Breast epithelium (tissue), 4 donors: ENCODE measurements at regions of chr18 and their contacts with region 1.

Region 1: GRCh38 chr18:37874721-37875120 is 309.1 kb upstream of the CELF4 start:
- DNase-seq: no peak
- H3K4me3 ChIP-seq: no peak overlapping the region
- H3K27ac ChIP-seq: no peak overlapping the region
- H3K4me1 ChIP-seq: no peaks in the 10 kb centered on the region
- H3K27me3 ChIP-seq: no peaks in the 10 kb centered on the region
- CTCF ChIP-seq: no peak
- POLR2A ChIP-seq: no peak

Region 2: GRCh38 chr18:37900326-37900725 is 25.6 kb after region 1 on chr18:
- intact Hi-C with region 1: loop called (anchors 1 kb)
- DNase-seq: no peak
- H3K4me3 ChIP-seq: no peak overlapping the region
- H3K27ac ChIP-seq: no peak overlapping the region
- H3K4me1 ChIP-seq: no peaks in the 10 kb centered on the region
- H3K27me3 ChIP-seq: no peaks in the 10 kb centered on the region
- CTCF ChIP-seq: no peak
- POLR2A ChIP-seq: no peak